Activated T-helper 2 cell treated with anti-CD3 and anti-CD28 coated beads, Interferon-gamma antibody, Interleukin-2, Interleukin-4, amounts not matched to agents 10 μg/mL and 5 μg/mL and 100 μg/mL, durations not matched to agents 14 hours and 24 hours and 36 hours (primary cell): ENCODE measurements at regions of chr1 and their contacts with region 1.

Region 1: DNA sequence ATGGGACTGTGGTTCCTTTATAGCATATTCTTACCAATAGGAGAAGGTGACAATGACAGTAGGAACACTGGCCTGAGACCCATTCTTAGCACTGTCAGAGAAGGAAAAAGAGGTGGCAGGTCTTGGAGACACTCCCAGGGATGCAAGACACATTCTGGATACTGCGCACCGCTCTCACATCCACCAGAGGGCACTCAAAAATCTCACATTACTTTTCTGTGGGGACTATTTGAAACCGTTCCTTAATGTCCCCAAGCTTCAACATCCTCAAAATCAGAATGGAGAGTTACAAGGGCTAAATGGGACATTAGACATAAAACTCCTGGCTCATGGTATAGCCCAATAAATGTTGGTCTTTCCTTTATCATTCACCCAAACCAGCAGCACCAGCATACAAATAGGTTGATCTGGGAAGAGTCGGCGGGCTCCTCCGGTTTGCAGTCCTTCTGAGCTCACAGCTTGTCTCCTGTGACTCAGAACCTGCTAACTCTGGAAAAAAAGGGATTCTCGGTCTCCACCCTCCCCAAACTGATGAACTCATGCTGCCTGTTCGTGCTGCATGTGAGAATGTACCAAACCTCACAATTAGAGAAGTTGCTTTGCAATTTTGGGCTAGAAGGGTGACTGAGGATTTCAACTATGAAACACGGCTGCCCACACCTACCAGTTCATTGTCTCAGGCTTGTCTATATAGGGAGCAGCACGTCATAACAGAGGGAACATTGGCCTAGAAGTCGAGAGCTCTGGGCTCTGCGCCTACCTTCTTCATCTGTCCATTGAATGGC is 40.2 kb downstream of the IL12RB2 start:
- DNase-seq: no peak
- H3K4me3 Mint-ChIP-seq: no peak overlapping the region
- H3K27ac Mint-ChIP-seq: no peak overlapping the region
- H3K4me1 Mint-ChIP-seq: peaks cover 27% of the 10 kb centered on the region
- H3K27me3 Mint-ChIP-seq: no peaks in the 10 kb centered on the region

Region 2: DNA sequence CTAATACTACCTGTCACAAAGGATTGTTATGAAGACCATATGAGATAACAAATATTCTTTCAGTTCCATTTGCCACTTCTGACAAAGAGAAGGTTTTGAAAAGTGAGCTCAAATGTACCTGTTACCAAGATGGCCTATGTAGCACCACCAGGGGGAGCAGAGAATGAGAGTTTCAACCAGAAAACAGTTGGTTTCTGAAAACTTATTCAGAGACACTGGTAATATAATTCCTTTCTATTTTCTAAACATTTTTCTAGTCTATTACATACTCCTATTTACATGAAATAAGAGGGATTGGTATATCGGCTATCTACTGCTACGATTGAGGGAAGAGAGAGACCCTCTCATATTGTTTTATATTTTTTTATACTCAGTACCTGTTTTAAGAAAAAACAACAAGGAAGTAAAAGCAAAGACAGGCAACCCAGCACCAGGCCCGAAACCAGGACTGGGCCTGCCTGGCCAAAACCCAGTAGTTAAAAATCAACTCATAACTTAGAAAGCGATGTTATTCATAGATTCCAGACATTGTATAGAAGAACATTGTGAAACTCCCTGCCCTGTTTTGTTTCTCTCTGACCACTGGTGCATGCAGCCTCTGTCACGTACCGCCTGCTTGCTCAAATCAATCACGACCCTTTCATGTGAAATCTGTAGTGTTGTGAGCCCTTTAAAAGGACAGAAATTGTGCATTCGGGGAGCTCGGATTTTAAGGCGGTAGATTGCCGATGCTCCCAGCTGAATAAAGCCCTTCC is 133.3 kb before region 1 on chr1:
- intact Hi-C with region 1: no loop called
- DNase-seq: no peak
- H3K4me3 Mint-ChIP-seq: no peak overlapping the region
- H3K27ac Mint-ChIP-seq: no peak overlapping the region
- H3K4me1 Mint-ChIP-seq: peaks cover 32% of the 10 kb centered on the region
- H3K27me3 Mint-ChIP-seq: no peaks in the 10 kb centered on the region

Region 3: DNA sequence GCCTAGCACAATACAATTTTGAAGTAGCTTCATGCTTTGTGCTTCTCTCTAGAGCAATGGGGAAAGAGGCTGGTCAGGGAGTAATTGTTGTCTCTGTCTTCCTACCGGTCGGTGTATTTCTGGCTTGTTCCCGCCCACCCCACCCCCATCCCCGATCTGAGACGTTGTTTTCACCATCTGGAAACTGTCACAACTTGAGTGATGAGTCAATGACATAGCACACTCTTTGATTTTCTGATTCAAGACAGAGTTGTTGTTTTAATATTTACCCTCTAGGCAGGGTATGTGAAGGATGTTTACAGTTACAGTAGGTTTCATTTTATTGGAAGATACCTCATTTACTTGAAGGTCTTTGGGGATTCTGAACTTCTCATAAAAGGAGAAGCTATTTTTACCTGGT is 33.2 kb before region 1 on chr1:
- intact Hi-C with region 1: no loop called
- DNase-seq: no peak
- H3K4me3 Mint-ChIP-seq: peak overlapping the region; percentile 32
- H3K27ac Mint-ChIP-seq: peak overlapping the region; percentile 77
- H3K4me1 Mint-ChIP-seq: peaks cover 56% of the 10 kb centered on the region
- H3K27me3 Mint-ChIP-seq: no peaks in the 10 kb centered on the region

Region 4: DNA sequence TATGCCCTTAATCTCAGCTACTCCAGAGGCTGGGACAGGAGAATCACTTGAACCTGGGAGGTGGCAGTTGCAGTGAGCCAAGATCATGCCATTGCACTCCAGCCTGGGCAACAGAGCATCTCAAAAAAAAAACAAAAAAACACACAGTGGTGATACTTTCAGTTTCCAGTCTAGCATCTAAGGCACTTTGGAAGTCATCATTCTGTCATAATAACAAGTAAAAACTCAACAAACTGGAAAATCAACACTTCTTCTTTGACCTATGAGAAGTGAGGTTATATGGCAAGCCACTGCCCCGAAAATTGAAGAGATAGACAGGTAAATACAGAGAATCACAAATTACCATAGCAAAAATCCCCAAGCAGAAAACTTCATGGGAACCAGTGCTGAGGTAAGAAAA is 11.7 kb after region 1 on chr1:
- intact Hi-C with region 1: no loop called
- DNase-seq: no peak
- H3K4me3 Mint-ChIP-seq: no peak overlapping the region
- H3K27ac Mint-ChIP-seq: peak overlapping the region; percentile 33
- H3K4me1 Mint-ChIP-seq: peaks cover 31% of the 10 kb centered on the region
- H3K27me3 Mint-ChIP-seq: no peaks in the 10 kb centered on the region

Region 5: DNA sequence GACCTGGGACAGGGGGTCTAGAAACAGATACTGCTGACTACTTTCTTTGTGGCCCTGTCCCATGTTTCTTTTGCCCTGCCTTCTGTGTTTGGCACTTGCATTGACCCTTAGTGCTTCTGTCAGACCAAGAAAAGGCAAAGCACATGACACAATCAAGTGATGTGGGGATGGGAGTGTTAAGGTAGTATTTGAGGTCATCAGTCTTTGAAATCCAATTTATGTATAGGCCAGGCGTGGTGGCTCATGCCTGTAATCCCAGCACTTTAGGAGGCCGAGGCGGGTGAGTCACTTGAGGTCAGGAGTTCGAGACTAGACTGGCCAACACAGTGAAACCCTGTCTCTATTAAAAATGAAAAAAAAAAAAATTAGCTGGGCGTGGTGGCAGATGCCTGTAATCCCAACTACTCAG is 56.3 kb after region 1 on chr1:
- intact Hi-C with region 1: loop called (anchors 5 kb)
- DNase-seq: no peak
- H3K4me3 Mint-ChIP-seq: no peak overlapping the region
- H3K27ac Mint-ChIP-seq: peak overlapping the region; percentile 33
- H3K4me1 Mint-ChIP-seq: peaks cover 4% of the 10 kb centered on the region
- H3K27me3 Mint-ChIP-seq: no peaks in the 10 kb centered on the region